Esophagus muscularis mucosa (tissue), 4 donors: ENCODE measurements at regions of chr11 and their contacts with region 1.

Region 1: DNA sequence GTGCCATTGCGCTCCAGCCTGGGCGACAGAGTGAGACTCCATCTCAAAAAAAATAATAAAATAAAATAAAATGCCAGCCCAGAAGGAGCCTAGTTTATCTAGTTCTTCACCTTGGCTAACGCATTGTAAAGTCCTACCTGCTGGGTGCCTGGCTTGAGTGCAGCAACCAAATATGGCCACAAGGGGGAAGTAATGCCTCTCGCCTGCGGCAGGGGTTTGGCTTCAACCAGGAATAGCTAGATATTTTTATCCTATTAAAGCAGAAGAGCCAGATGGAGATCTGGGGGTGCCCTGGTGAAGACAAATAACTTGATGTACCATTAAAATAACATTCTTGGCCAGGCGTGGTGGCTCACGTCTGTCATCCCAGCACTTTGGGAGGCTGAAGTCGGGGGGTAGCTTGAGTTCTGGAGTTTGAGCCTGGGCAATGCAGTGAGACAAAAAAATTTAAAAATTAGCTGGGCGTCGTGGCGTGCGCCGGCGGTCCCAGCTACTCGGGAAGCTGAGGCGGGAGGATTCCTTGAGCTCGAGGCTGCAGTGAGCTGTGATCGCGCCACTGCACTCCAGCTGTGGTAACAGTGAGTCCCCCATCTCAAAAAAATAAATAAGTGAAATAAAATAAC is 20.6 kb upstream of the PLEKHB1 start:
- DNase-seq: no peak
- H3K4me3 ChIP-seq: peak overlapping the region; percentile 28 to 40 (median 36)
- H3K27ac ChIP-seq: no peak overlapping the region
- H3K4me1 ChIP-seq: peaks cover 4 to 10% (median 9%) of the 10 kb centered on the region in 4 donors
- H3K27me3 ChIP-seq: peaks cover 0 to 30% (median 0%) of the 10 kb centered on the region in 4 donors
- CTCF ChIP-seq: peak; percentile 82 to 98 (median 86)
- EP300 ChIP-seq: no peak
- POLR2A ChIP-seq: no peak

Region 2: GRCh38 chr11:73404048-73404447 is 221.8 kb before region 1 on chr11:
- intact Hi-C with region 1: loop called (anchors 10 kb)
- DNase-seq: no peak
- H3K4me3 ChIP-seq: no peak overlapping the region
- H3K27ac ChIP-seq: peak overlapping the region in 1 of 4 donors; percentile 61
- H3K4me1 ChIP-seq: peaks cover 7 to 20% (median 13%) of the 10 kb centered on the region in 4 donors
- H3K27me3 ChIP-seq: no peaks in the 10 kb centered on the region
- CTCF ChIP-seq: peak; percentile 73 to 81 (median 79)
- EP300 ChIP-seq: no peak
- POLR2A ChIP-seq: no peak